Activated CD4-positive, alpha-beta T cell treated with anti-CD3 and anti-CD28 coated beads, Interleukin-2, amount 10 ng/mL, durations not matched to agents 7 days and 5 days (primary cell): ENCODE measurements at regions of chr16 and their contacts with region 1.

Region 1: DNA sequence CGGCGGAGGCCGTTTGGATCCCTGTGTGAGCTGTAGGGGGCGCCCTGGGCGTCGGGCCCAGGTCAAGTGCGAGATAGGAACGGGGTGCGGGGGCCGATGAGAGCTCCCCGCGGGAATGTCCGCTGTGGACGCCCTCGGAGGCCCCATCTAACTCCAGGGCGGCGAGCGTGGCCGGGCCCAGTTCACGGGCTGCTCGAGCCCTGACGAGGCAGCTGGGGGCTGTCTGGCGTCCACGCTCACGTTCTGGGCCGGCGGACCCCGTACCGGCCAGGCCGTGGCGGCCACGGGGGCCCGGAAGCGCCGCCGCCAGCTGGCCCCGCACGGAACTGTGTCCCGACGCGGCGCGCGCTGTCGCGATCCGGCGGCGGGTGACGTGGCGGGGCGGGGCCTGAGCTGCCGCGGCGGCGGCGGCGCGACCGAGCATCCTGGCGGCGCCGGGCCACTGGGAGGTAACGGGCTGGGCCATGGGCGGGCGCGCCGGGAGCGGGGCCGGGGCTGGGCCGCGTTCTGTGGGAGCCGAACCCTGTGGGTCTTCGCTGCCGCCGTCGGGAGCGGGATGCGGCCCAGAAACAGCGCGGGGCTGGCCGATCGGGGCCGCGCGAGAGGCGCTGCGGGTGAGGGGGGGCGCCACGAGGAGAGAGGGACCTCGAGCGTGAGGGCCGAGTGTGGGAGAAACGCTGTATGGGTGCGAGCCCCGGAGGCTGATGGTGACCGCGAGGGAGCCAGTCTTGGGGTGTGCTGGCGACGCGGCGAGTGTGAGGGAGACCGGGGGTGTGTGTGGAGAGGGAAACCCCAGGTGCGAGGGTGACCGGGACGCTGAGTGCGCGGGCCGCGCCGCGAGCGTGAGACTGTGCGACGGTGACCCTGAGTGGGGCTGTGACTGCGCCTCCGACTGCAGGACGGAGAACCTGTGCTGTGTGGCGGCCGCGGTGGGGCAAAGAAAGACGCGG is at the start of gene SLC7A6:
- DNase-seq: peak; percentile 81
- H3K4me3 Mint-ChIP-seq: peak within 1 kb of the TSS; percentile 82
- H3K27ac Mint-ChIP-seq: peak within 1 kb of the TSS; percentile 98
- H3K4me1 Mint-ChIP-seq: peaks cover 52% of the 10 kb centered on the region
- H3K27me3 Mint-ChIP-seq: no peaks in the 10 kb centered on the region
- total RNA-seq, gene SLC7A6: 116 to 130 TPM

Region 2: DNA sequence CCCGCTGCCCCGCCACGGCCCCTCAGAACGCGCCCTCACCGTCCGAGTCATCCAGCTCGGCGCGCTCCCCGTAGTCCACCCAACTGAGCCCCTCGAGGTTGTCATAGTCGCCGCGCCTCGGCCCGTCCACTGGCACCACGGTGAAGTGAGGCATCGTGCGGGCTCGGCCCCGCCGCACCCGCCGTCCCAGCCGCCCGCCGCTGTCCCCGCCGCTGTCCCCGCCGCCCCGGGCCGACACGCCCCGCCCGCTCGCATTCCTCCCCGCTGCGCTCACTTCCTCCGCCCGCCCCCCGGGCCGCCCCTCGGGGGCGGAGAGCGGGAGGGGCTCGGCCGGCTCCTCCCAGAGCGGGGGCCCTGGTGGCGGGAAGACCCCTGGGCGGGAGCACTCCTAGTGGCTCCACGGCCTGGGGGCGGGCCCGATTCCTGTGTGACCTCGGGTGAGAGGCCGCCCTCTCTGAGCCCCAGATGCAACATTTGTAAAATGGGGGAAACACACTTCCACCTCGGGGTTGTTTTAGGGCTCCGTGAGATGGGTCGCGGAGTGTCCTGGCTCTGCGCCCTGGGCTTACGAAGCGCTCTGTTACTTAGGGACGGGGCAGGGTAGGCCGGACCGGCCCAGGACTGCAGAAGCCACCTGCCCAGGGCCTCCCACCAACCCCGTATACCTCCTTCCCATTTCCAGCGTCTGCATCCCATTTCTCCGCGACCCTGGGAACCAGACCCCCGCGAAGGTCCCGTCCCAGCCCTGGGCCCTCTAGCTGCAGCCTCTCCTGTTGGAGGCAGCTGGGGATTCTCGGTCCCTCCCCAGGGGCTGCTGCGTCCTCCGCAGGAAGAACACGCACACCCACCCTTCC is 295.8 kb before region 1 on chr16 and contains the start of gene SLC12A4:
- CTCF ChIA-PET with region 1: no interaction called
- POLR2A ChIA-PET with region 1: no interaction called
- DNase-seq: peak; percentile 85
- H3K4me3 Mint-ChIP-seq: peak within 1 kb of the TSS; percentile 91
- H3K27ac Mint-ChIP-seq: peak within 1 kb of the TSS; percentile 90
- H3K4me1 Mint-ChIP-seq: peaks cover 27% of the 10 kb centered on the region
- H3K27me3 Mint-ChIP-seq: no peaks in the 10 kb centered on the region
- total RNA-seq, gene SLC12A4: 27.1 to 29.5 TPM

Region 3: GRCh38 chr16:68275611-68276191 is 11.3 kb after region 1 on chr16:
- CTCF ChIA-PET with region 1: interaction called, 22 read pairs
- POLR2A ChIA-PET with region 1: no interaction called
- DNase-seq: peak; percentile 73
- H3K4me3 Mint-ChIP-seq: peak overlapping the region; percentile 49
- H3K27ac Mint-ChIP-seq: peak overlapping the region; percentile 94
- H3K4me1 Mint-ChIP-seq: peaks cover 72% of the 10 kb centered on the region
- H3K27me3 Mint-ChIP-seq: no peaks in the 10 kb centered on the region

Region 4: GRCh38 chr16:68289621-68290329 is 25.4 kb after region 1 on chr16:
- CTCF ChIA-PET with region 1: interaction called, 54 read pairs
- POLR2A ChIA-PET with region 1: no interaction called
- DNase-seq: peak; percentile 56
- H3K4me3 Mint-ChIP-seq: peak overlapping the region; percentile 0
- H3K27ac Mint-ChIP-seq: peak overlapping the region; percentile 83
- H3K4me1 Mint-ChIP-seq: peaks cover 87% of the 10 kb centered on the region
- H3K27me3 Mint-ChIP-seq: no peaks in the 10 kb centered on the region

Region 5: GRCh38 chr16:68310761-68311511 is 46.5 kb after region 1 on chr16 and contains the starts of genes PRMT7 and SLC7A6OS:
- CTCF ChIA-PET with region 1: interaction called, 18 read pairs
- POLR2A ChIA-PET with region 1: interaction called, 13 read pairs
- DNase-seq: peak; percentile 95
- H3K4me3 Mint-ChIP-seq: peak within 1 kb of the TSS; percentile 93
- H3K27ac Mint-ChIP-seq: peak within 1 kb of the TSS; percentile 95
- H3K4me1 Mint-ChIP-seq: peaks cover 50% of the 10 kb centered on the region
- H3K27me3 Mint-ChIP-seq: no peaks in the 10 kb centered on the region
- total RNA-seq, gene PRMT7: 76.9 TPM
- total RNA-seq, gene SLC7A6OS: 25.9 to 28.6 TPM

Region 6: DNA sequence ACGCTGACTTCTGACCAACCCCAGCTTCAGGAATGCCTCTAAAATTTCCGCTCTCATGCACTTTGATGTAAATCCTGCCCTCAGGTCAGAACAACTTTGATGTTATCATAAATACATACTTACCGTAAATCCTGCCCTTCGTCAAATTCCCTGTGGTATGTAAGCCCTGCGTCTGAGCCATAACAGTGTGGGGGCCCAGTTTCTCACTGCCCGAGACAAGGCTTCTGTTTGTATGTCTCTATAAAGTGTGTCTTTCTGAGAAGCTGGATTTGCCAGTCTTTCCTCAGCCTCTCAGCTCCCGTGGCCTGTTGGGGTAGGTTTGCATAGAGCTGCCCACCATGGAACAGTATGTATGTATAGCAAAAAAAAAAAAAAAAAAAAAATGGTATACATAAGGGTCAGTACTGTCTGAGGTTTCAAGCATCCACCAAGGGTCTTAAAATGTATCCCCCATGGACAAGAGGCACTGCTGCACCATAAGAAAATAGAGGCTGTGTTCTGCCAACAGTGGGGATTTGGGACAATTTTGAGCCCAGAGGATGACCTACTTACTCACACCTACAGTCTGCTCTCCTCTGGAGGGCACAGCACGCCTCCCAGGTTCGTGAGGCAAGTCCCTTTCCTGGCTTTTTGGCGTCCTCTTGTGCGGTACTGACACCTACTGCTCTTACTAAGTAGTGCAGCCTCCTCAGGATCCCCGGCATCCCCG is 63.9 kb after region 1 on chr16:
- CTCF ChIA-PET with region 1: interaction called, 172 read pairs
- POLR2A ChIA-PET with region 1: no interaction called
- DNase-seq: peak; percentile 85
- H3K4me3 Mint-ChIP-seq: no peak overlapping the region
- H3K27ac Mint-ChIP-seq: no peak overlapping the region
- H3K4me1 Mint-ChIP-seq: peaks cover 29% of the 10 kb centered on the region
- H3K27me3 Mint-ChIP-seq: no peaks in the 10 kb centered on the region

Region 7: GRCh38 chr16:68356249-68356918 is 92.0 kb after region 1 on chr16:
- CTCF ChIA-PET with region 1: interaction called, 12 read pairs
- POLR2A ChIA-PET with region 1: no interaction called
- DNase-seq: peak; percentile 84
- H3K4me3 Mint-ChIP-seq: peak overlapping the region; percentile 56
- H3K27ac Mint-ChIP-seq: peak overlapping the region; percentile 58
- H3K4me1 Mint-ChIP-seq: peaks cover 42% of the 10 kb centered on the region
- H3K27me3 Mint-ChIP-seq: peaks cover 5% of the 10 kb centered on the region